ENCODE measurements at regions of chr1 and their contacts with region 1.

Region 1: DNA sequence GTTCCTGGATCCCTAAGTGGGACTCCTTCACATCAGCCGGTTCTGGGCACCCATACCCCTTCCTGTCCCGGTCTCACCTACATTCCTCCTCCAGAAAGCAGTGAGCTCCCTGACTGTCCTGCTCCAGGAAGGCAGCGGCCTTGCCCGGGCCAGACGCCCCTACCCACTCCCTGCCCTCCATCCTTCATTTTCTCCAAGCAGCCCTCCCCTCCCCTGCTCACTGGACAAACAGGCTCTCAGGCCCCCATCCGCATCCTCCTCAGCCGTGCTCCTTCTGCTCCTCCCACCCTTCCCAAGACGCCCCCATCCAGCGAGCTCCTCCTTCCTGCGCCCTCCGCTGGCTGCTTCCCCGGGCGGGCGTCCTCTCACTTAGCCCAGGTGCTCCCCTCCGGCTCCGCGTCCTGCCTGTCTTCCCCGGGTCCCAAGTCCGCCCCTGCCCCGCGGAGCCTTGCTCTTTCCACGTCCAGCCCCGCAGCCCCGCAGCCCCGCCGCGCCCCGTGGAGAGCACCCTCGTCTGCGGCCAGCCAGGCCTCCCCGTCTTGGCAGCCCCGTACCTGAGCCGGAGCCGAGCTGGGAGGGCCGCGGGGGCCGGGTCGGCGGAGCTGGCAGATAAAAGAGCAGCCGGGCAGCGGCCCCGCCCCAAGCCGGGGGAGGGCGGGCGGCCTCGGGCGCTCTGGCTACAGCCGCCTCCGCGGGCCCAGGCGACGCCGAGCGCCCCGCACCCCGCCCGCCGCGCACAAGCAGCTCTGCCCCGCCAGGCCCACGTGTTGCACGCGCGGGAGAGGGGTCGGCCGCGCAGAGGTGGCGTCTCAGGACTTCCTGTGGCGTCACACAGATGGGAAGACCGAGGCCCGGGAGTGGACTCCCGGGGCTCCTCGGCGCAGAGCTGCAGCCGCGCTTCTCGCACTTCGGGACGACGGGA is at the start of gene PAQR7:
- DNase-seq: peak; percentile 70
- ATAC-seq: peak; percentile 90
- H3K4me3 ChIP-seq: peak within 1 kb of the TSS; percentile 54
- H3K27ac ChIP-seq: peak within 1 kb of the TSS; percentile 58
- H3K4me1 ChIP-seq: peaks cover 18% of the 10 kb centered on the region
- H3K27me3 ChIP-seq: no peaks in the 10 kb centered on the region
- CTCF ChIP-seq: no peak
- POLR2A ChIP-seq: no peak
- RAD21 ChIP-seq: 0 out of 2 replicates have a peak, but pooled peaks have one; percentile 8
- total RNA-seq, gene PAQR7: 8.3 and 9.0 TPM in 2 replicates

Region 2: GRCh38 chr1:25912076-25912831 is 37.1 kb after region 1 on chr1:
- CTCF ChIA-PET with region 1: no interaction called
- POLR2A ChIA-PET with region 1: no interaction called
- dilution Hi-C with region 1: no loop called
- in situ Hi-C with region 1: no loop called
- intact Hi-C with region 1: loop called (anchors 1 kb)
- DNase-seq: peak; percentile 89
- ATAC-seq: peak; percentile 92
- H3K4me3 ChIP-seq: no peak overlapping the region
- H3K27ac ChIP-seq: peak overlapping the region; percentile 39; the same call in 1 of the 2 replicates
- H3K4me1 ChIP-seq: peaks cover 5% of the 10 kb centered on the region; the same call in 1 of the 2 replicates
- H3K27me3 ChIP-seq: no peaks in the 10 kb centered on the region
- CTCF ChIP-seq: no peak
- POLR2A ChIP-seq: no peak
- RAD21 ChIP-seq: no peak

Region 3: DNA sequence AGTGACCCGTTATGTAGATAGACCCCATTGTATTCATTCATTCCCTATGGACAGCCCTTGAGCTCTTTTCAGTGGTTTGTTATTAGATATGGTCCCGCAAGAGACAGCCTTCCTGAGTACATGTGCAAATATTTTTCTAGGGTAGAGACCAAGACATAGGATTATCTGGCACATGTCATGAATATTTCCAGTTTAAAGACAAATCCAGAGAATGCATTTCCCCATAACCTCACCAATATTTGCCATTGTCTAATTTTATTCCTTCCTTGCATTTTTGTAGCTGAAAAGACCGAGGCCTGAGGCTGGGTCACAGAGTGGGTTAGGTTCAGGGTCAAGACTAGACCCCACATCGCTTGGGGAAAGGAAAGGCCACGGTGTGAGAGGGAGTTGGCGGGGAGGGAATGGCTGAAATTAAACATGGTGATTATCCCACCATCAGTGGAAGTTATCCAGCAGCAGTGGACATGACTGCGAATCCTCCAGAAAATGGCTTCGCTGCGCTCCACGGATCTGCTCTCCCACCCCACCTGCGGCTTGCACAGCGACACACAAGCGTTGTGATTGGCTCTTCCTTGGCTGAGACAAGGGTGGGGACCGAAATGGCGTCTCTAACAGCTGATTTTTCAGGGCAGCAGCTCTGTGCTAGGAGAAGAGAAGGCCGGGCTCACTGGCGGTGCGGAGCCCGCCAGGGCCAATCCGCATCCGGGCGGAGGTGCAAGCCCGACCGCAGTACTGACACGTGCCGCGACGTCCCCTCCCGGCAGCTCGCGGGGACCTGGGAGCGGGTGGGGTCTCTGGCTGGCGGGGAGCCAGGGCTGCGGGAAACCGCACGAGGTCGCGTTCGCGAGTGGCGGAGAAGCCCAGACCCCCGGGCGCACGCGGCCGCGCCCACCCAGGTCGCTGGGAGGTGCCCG is 47.1 kb after region 1 on chr1:
- CTCF ChIA-PET with region 1: no interaction called
- POLR2A ChIA-PET with region 1: no interaction called
- dilution Hi-C with region 1: no loop called
- in situ Hi-C with region 1: no loop called
- intact Hi-C with region 1: no loop called
- DNase-seq: no peak
- ATAC-seq: peak; percentile 66
- H3K4me3 ChIP-seq: peak overlapping the region; percentile 36
- H3K27ac ChIP-seq: no peak overlapping the region
- H3K4me1 ChIP-seq: peaks cover 10% of the 10 kb centered on the region
- H3K27me3 ChIP-seq: peaks cover 13% of the 10 kb centered on the region
- CTCF ChIP-seq: no peak
- POLR2A ChIP-seq: no peak
- RAD21 ChIP-seq: no peak

Region 4: DNA sequence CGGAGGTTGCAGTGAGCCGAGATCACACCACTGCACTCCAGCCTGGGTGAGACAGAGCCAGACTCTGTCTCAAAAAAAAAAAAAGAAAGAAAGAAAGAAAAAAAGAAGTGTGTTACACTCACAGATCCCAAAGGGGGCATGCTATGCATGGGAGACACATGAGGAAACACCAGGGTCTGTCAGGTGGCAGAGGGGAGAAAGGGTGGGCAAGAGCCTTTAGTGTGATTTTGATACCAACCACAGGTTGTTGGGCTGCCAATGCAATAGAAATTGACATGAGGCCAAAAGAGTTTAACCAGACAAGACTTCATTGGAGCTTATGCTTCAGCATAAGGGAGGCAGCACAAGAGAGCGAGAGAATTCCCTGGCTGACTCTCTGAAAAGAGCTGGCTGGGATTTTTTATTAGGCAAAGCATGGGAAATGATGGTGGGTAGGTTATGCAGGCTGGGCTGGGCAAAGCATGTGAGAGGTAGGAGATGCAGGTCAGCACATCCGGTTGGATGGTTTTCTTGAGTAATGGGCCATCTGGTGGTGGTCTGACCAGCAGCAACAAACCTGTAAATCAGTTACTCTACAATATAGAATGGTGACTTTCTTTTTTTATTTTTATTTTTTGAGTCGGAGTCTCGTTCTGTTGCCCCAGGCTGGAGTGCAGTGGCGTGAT is 134.7 kb after region 1 on chr1:
- CTCF ChIA-PET with region 1: no interaction called
- POLR2A ChIA-PET with region 1: no interaction called
- dilution Hi-C with region 1: no loop called
- in situ Hi-C with region 1: no loop called
- intact Hi-C with region 1: no loop called
- DNase-seq: no peak
- ATAC-seq: no peak
- H3K4me3 ChIP-seq: no peak overlapping the region
- H3K27ac ChIP-seq: no peak overlapping the region
- H3K4me1 ChIP-seq: no peaks in the 10 kb centered on the region
- H3K27me3 ChIP-seq: peaks cover 7% of the 10 kb centered on the region
- CTCF ChIP-seq: no peak
- POLR2A ChIP-seq: no peak
- RAD21 ChIP-seq: no peak

Measured in IMR-90 (cell line).